A673 (cell line): ENCODE measurements at regions of chr18 and their contacts with region 1.

Region 1: DNA sequence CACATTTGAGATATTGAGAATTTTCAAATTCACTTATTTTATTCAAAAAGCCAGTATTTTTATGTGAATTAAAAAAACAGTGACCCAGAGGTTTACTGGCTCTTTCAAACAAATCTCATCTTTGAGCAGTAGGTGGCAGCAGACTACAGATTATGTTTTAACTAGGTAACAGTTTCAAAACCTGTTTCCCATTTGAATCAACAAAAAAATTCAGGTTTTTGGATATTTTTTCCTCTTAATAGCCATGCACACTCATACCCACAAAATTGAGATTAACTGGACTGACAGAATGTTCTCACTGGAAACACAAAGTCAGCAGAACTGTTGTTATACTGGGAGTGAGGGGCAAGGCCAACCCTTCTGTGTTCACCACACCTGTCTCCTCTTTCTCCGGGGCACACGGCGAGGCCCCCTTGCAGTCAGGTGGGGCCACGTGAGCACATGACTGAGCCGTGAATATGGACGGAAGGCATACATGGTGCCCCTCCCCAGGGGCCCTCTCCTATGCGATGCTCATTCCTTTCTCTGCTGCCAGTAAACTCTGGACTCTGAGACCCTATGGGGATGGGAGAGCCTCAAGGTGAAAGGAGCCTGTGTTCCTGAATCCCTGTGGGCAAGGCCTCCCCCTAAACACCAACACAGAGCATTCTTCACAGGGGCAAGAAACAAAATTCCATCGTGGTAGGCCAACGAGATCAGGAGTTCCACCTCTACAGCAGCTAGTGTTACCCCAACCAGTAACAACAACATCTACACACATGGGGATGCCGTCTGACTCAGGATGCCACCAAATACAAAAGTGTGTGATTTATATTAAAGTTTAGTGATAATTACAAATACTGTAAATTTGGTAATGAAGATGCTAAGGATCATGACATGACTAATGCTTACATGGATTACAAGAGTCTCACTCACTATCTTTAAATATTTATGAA is 80.4 kb downstream of the LPIN2 start:
- DNase-seq: peak; percentile 79
- H3K4me3 ChIP-seq: no peak overlapping the region
- H3K27ac ChIP-seq: no peak overlapping the region
- H3K4me1 ChIP-seq: no peaks in the 10 kb centered on the region
- H3K27me3 ChIP-seq: no peaks in the 10 kb centered on the region
- CTCF ChIP-seq: peak; percentile 77

Region 2: DNA sequence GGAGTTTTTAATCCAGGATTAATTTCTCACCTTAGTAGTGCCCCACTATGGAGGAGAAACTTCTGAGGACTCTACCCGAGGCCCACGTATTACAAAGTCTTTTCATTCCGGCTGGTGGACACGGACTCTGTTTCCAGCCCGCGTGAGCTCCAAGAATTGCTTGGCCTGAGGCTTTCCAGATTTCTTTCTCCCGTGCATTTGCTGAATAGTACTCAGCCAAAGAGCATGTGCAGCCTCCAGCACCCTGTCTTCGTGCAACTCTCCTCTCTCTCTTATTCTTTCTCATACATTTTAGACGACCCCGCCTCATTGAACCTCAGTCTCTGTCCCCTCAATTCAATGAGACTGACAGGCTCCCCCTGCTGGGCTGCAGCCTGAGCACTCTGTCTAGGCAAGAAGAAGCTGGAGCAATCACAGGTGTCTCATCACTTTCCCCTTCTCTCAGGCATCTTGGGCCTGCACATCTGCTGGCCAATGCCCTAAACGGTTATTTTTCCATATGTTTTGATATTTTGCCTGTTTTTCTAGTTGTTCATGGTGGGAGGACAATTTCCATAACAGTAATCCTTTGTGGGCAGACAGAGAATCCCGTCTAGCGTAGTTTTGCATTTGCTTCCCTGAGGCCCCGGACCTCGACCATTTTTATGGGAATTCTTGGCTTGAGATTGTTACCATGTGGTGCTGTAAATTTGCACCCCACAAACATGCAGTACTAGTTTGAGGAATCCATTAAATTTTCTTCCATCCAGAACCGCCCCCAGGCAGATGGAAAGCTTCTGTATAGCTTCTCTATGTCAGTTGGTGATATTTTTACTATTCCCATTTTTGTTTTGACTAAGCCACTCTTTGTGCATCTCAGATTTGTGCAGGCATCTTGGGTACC is 130.5 kb after region 1 on chr18:
- CTCF ChIA-PET with region 1: no interaction called
- POLR2A ChIA-PET with region 1: no interaction called
- intact Hi-C with region 1: loop called (anchors 1 kb)
- DNase-seq: peak; percentile 60
- H3K4me3 ChIP-seq: no peak overlapping the region
- H3K27ac ChIP-seq: no peak overlapping the region
- H3K4me1 ChIP-seq: no peaks in the 10 kb centered on the region
- H3K27me3 ChIP-seq: no peaks in the 10 kb centered on the region
- CTCF ChIP-seq: peak; percentile 94

Region 3: GRCh38 chr18:3129053-3129864 is 196.7 kb after region 1 on chr18:
- CTCF ChIA-PET with region 1: no interaction called
- POLR2A ChIA-PET with region 1: no interaction called
- intact Hi-C with region 1: loop called (anchors 1 kb)
- DNase-seq: peak; percentile 91
- H3K4me3 ChIP-seq: no peak overlapping the region
- H3K27ac ChIP-seq: no peak overlapping the region
- H3K4me1 ChIP-seq: no peaks in the 10 kb centered on the region
- H3K27me3 ChIP-seq: no peaks in the 10 kb centered on the region
- CTCF ChIP-seq: peak; percentile 98

Region 4: DNA sequence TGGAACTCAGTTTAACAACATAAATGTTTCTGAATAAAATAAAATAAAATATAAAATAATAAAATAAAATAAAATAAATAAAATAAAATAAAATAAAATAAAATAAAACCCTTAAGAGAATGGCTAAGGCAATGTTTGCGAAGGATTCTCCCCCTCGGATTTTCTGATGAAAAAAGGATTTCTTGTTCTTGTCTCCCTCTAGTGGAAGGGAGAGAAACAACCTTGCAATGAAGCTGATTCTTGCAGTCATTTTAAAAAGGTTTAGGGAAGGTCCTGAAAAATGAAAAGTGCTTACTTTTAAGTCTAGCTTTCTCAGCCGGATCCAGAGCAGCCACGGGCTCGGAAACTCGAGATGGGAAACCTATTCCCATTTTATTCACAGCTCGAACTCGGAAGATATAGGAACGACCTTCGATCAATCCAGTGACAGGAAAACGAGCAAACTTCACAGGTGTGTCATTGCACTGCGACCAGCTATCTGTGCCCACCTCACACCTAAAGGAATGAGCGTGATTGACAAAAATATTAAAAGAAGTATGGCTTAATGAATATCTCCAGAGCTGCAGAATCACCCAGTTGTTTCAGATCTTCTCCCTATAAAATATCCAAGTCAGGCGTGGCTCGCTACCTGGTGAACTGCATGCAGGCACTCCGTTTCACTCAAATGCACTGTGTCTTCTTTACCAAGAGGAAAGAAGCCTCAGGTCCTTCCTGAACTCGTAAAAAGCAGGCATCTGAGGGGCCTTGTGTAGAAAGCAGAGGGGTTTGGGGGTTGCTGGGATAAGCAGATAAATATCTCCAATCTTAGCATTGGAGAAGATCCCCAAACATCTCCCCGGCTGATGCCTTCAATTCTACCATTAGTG is 219.1 kb after region 1 on chr18:
- CTCF ChIA-PET with region 1: interaction called, 3 read pairs
- POLR2A ChIA-PET with region 1: interaction called, 3 read pairs
- intact Hi-C with region 1: loop called (anchors 5 kb)
- DNase-seq: peak; percentile 53
- H3K4me3 ChIP-seq: no peak overlapping the region
- H3K27ac ChIP-seq: no peak overlapping the region
- H3K4me1 ChIP-seq: peaks cover 9% of the 10 kb centered on the region
- H3K27me3 ChIP-seq: no peaks in the 10 kb centered on the region
- CTCF ChIP-seq: peak; percentile 78